ENCODE measurements at regions of chr4 and their contacts with region 1.

Region 1: DNA sequence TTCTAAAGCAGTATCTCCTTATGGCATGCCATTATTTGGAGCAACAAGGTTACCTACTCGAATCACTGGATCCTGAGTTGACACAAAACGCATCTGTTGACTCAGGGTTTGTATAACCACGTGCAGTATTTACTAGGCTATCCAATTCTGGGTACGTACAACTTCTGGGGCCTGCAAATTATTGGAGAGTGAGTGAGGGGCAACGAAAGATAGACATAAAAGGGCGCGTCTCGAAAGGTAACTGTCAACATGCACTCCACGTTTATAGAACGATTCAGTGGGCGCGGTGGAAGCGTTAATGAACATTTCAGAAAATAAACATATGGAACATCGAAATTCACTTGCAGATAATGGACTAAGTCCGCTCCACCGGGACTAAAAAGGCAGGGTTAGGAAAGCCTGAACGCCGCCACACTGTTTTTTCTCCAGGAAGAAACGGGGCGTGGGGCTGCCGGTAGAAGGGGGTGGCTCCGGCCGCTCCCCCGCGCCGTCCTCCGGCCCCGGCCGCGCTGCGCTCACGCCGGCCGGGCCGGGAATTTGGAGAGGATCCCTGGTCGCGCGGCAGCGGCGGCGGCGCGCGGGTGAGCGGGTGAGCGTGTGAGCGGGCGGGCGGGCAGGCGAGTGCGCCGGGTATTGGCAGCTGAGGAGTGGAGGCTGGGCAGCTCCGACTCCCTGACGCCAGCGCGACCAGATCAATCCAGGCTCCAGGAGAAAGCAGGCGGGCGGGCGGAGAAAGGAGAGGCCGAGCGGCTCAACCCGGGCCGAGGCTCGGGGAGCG is at the start of gene SMAD1:
- DNase-seq: peak; percentile 75
- H3K4me3 Mint-ChIP-seq: no peak within 1 kb of the TSS
- H3K27ac Mint-ChIP-seq: peak within 1 kb of the TSS; percentile 79
- H3K4me1 Mint-ChIP-seq: peaks cover 10% of the 10 kb centered on the region
- H3K27me3 Mint-ChIP-seq: peaks cover 38% of the 10 kb centered on the region
- total RNA-seq, gene SMAD1: 3.9 and 4.3 TPM in 2 replicates

Region 2: DNA sequence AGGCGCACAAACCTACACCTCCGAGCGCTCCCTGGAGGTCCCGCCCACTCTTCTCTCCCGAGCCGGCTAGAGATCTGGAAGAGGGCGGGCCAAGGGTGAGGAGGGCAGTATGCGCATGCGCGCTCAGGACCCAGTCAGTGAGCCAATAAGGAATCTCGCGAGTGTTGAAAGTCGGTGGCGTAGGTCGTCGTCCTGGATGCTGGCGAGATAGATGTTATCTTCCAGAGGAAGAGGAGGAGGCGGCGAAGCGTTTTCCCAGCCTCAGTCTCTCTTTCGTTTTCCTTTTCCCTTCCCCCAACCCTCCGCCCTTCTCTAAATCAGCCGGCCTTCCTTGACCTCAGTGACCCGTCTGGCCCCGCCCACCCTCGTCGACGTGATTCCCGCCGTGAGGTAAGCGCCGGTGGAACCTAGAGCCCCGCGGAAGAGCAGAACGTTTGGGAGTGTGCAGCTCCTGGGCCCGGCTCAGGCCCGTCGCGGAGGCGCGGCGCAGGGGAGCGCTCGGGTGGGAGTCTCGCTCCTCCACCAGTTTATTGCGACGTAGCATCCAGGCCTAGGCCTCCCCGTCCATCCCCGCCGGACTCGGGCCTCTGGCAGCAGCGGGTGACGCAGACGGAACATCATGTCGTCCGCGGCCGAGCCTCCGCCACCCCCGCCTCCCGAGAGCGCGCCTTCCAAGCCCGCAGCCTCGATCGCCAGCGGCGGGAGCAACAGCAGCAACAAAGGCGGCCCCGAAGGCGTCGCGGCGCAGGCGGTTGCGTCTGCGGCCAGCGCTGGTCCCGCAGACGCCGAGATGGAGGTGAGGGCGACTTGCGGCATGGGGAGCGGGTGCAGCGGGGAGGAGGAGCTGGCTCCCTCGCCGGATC is 1967.8 kb before region 1 on chr4 and contains the start of gene SMARCA5:
- intact Hi-C with region 1: loop called (anchors 10 kb)
- DNase-seq: peak; percentile 98
- H3K4me3 Mint-ChIP-seq: peak within 1 kb of the TSS; percentile 100
- H3K27ac Mint-ChIP-seq: peak within 1 kb of the TSS; percentile 97
- H3K4me1 Mint-ChIP-seq: peaks cover 25% of the 10 kb centered on the region
- H3K27me3 Mint-ChIP-seq: peaks cover 14% of the 10 kb centered on the region
- total RNA-seq, gene SMARCA5: 59.0 and 60.6 TPM in 2 replicates

Region 3: DNA sequence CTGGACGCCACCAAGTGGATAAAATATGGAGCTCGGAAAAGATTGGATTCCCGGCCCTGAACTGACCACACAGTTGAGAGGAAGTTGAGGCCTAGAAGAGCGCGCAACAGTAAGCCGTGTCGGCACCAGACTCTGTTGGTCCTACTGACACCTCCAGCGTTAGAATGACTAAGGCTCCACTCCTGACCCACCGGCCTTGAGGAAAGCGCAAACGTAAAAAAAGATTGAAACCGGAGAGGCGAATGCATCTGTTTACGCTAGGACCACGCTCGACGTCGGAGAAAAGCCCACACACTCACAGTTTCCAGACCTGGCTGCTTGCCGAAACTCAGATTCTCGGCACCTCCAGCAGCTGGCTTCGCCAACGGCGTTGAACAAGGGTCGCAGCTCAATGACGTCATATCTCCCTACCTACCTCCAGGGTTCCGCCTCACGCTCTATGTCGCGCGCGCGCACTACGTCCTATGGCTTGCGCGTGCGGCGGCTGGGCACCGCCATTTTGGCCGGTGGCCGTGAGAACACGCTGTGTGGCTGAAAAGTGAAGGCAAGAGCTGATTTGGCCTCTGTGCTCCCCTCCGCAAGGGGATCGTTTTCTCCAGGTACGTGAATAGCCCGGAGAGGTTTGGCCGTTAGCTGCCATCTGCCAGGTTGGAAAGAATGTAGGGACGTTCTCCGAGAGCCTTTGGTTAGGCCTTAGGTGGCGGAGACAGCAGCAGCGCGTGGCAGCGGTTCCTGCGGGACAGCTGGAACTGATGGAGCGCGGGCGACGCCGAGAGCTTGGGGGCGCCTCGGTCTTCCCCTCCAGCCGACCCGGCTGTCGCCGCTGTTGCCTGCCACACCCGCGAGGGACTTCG is 383.3 kb before region 1 on chr4 and contains the starts of genes ABCE1 and ANAPC10:
- intact Hi-C with region 1: loop called (anchors 5 kb)
- DNase-seq: peak; percentile 99
- H3K4me3 Mint-ChIP-seq: peak within 1 kb of the TSS; percentile 96
- H3K27ac Mint-ChIP-seq: peak within 1 kb of the TSS; percentile 99
- H3K4me1 Mint-ChIP-seq: peaks cover 24% of the 10 kb centered on the region
- H3K27me3 Mint-ChIP-seq: no peaks in the 10 kb centered on the region
- total RNA-seq, gene ABCE1: 191 and 194 TPM in 2 replicates
- total RNA-seq, gene ANAPC10: 26.7 and 30.4 TPM in 2 replicates

Region 4: GRCh38 chr4:145299380-145300076 is 181.8 kb before region 1 on chr4:
- intact Hi-C with region 1: loop called (anchors 1 kb)
- DNase-seq: peak; percentile 74
- H3K4me3 Mint-ChIP-seq: no peak overlapping the region
- H3K27ac Mint-ChIP-seq: no peak overlapping the region
- H3K4me1 Mint-ChIP-seq: peaks cover 11% of the 10 kb centered on the region
- H3K27me3 Mint-ChIP-seq: peaks cover 14% of the 10 kb centered on the region

Region 5: GRCh38 chr4:145808021-145808650 is 326.8 kb after region 1 on chr4:
- intact Hi-C with region 1: loop called (anchors 5 kb)
- DNase-seq: peak; percentile 83
- H3K4me3 Mint-ChIP-seq: peak overlapping the region; percentile 60
- H3K27ac Mint-ChIP-seq: peak overlapping the region; percentile 95
- H3K4me1 Mint-ChIP-seq: peaks cover 44% of the 10 kb centered on the region
- H3K27me3 Mint-ChIP-seq: no peaks in the 10 kb centered on the region

Region 6: GRCh38 chr4:145929415-145930178 is 448.2 kb after region 1 on chr4:
- intact Hi-C with region 1: no loop called
- DNase-seq: no peak
- H3K4me3 Mint-ChIP-seq: no peak overlapping the region
- H3K27ac Mint-ChIP-seq: no peak overlapping the region
- H3K4me1 Mint-ChIP-seq: peaks cover 33% of the 10 kb centered on the region
- H3K27me3 Mint-ChIP-seq: no peaks in the 10 kb centered on the region

Region 7: DNA sequence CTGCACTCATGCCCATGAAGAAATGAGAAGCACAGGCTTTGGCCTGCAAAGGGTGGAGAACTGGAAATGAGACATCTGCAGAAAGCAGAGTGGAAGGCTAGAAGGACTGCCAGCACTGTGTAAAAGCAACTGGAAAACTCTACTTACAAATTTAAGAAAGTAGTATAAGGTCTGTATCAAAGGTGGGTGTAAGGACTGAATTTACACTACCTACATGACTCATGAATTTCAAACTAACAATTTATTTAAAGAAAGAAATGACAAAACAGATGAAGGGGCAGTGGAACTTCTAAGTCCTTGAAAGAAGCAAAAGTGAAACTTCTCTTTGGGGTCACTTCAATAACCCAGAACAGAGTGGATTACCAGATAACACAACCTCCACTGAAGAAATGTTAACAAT is 969.2 kb after region 1 on chr4:
- intact Hi-C with region 1: loop called (anchors 10 kb)
- DNase-seq: no peak
- H3K4me3 Mint-ChIP-seq: peak overlapping the region; percentile 56
- H3K27ac Mint-ChIP-seq: peak overlapping the region; percentile 84
- H3K4me1 Mint-ChIP-seq: peaks cover 23% of the 10 kb centered on the region
- H3K27me3 Mint-ChIP-seq: no peaks in the 10 kb centered on the region